CD4-positive, alpha-beta memory T cell (primary cell): ENCODE measurements at regions of chr9 and their contacts with region 1.

Region 1: GRCh38 chr9:5628530-5629311 is at the start of gene RIC1:
- DNase-seq: peak; percentile 89 to 90 (median 90)
- H3K4me3 ChIP-seq: peak within 1 kb of the TSS; percentile 82 to 86
- H3K4me3 Mint-ChIP-seq: peak within 1 kb of the TSS; percentile 97 to 99 (median 98)
- H3K27ac ChIP-seq: peak within 1 kb of the TSS; percentile 89
- H3K27ac Mint-ChIP-seq: peak within 1 kb of the TSS; percentile 92 to 99 (median 97)
- H3K4me1 ChIP-seq: peaks cover 76% of the 10 kb centered on the region
- H3K4me1 Mint-ChIP-seq: peaks cover 44 to 65% (median 53%) of the 10 kb centered on the region in 4 donors
- H3K27me3 ChIP-seq: no peaks in the 10 kb centered on the region
- H3K27me3 Mint-ChIP-seq: no peaks in the 10 kb centered on the region
- total RNA-seq, gene RIC1: 26.3 to 27.1 TPM

Region 2: GRCh38 chr9:4740638-4741364 is 887.9 kb before region 1 on chr9 and contains the start of gene AK3:
- CTCF ChIA-PET with region 1: no interaction called
- POLR2A ChIA-PET with region 1: interaction called, 12 read pairs
- intact Hi-C with region 1: no loop called
- DNase-seq: peak; percentile 82 to 87 (median 84)
- H3K4me3 ChIP-seq: peak within 1 kb of the TSS; percentile 79 to 84
- H3K4me3 Mint-ChIP-seq: peak within 1 kb of the TSS; percentile 91 to 97 (median 94)
- H3K27ac ChIP-seq: peak within 1 kb of the TSS; percentile 78
- H3K27ac Mint-ChIP-seq: peak within 1 kb of the TSS; percentile 65 to 96 (median 94)
- H3K4me1 ChIP-seq: peaks cover 29% of the 10 kb centered on the region
- H3K4me1 Mint-ChIP-seq: peaks cover 20 to 44% (median 32%) of the 10 kb centered on the region in 4 donors
- H3K27me3 ChIP-seq: no peaks in the 10 kb centered on the region
- H3K27me3 Mint-ChIP-seq: no peaks in the 10 kb centered on the region
- total RNA-seq, gene AK3: 23.1 to 25.2 TPM

Region 3: DNA sequence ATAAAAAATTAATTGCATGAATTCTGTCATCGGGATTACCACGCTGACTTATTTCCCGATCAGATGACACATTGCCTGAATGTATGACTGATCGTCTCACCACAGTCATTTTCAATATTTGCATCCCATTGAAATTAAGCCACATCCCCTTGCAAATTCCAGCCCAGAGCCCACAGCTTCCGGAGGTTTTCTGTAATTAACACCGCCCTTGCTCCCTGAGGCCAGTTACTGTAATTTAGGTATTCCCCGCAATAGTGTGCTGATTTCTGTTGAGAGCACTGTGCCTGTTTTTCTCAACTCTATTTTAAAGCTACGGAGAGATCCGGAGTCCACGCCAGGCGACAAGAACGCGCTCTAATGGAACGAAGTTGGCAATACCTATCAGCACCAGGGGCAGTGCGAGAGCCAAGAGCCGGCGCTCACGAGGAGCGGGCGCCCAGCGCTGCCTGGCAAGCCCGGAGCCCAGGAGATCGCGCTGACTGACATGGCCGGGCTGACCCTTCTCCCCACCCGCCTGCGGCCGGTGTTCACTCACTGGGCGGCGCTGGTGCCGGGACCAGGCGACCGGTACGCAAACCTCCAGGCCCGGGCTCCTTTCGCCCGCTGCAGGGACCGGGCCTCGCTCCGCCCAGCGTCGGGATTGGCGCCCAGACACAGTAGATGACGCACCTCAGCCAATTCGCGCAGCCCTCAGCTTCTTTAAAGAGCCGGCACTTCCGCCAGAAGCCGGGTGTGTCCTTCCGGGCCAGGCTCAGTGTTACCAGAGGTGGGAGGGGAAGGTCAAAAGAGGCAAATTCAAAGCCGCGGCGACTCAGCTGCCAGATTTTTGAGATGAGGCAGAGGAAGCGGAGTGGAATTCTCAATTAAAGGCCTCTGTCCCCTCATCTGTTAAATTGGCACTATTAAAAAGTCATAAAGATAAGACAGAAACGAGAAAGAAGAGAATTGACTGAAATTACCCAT is 191.2 kb before region 1 on chr9 and contains the start of gene PLGRKT:
- CTCF ChIA-PET with region 1: interaction called, 5 read pairs
- POLR2A ChIA-PET with region 1: interaction called, 27 read pairs
- intact Hi-C with region 1: loop called (anchors 1 kb)
- DNase-seq: peak; percentile 89 to 95 (median 91)
- H3K4me3 ChIP-seq: peak within 1 kb of the TSS; percentile 71 to 83
- H3K4me3 Mint-ChIP-seq: peak within 1 kb of the TSS; percentile 91 to 98 (median 94)
- H3K27ac ChIP-seq: peak within 1 kb of the TSS; percentile 92
- H3K27ac Mint-ChIP-seq: peak within 1 kb of the TSS; percentile 99 to 100 (median 99)
- H3K4me1 ChIP-seq: peaks cover 23% of the 10 kb centered on the region
- H3K4me1 Mint-ChIP-seq: peaks cover 25 to 46% (median 36%) of the 10 kb centered on the region in 4 donors
- H3K27me3 ChIP-seq: no peaks in the 10 kb centered on the region
- H3K27me3 Mint-ChIP-seq: no peaks in the 10 kb centered on the region
- total RNA-seq, gene PLGRKT: 20.0 to 21.7 TPM

Region 4: DNA sequence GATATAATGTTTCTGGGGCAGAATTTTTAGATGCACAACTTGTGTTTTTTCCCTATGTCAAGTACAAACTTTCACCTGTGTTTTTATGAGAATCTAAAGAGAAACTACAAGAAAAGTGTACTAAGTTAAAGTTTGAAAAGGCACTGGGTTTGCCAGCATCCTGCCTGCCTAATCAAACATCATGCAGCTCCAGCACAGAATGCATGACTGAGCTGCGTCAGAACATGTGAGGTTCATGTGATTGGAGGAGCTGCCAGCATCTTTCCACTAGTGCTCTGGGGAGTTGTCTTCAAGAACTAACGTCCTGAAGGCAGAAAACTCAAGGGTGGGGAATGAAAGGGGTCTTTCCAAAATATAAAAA is 45.9 kb before region 1 on chr9:
- CTCF ChIA-PET with region 1: interaction called, 3 read pairs
- POLR2A ChIA-PET with region 1: interaction called, 28 read pairs
- intact Hi-C with region 1: no loop called
- DNase-seq: peak in 4 of 5 donors; percentile 42 to 63 (median 52)
- H3K4me3 ChIP-seq: no peak overlapping the region
- H3K4me3 Mint-ChIP-seq: peak overlapping the region in 3 of 8 donors; percentile 7 to 48 (median 13)
- H3K27ac ChIP-seq: no peak overlapping the region
- H3K27ac Mint-ChIP-seq: peak overlapping the region; percentile 49 to 92 (median 88)
- H3K4me1 ChIP-seq: peaks cover 35% of the 10 kb centered on the region
- H3K4me1 Mint-ChIP-seq: peaks cover 43 to 64% (median 44%) of the 10 kb centered on the region in 4 donors
- H3K27me3 ChIP-seq: no peaks in the 10 kb centered on the region
- H3K27me3 Mint-ChIP-seq: no peaks in the 10 kb centered on the region

Region 5: DNA sequence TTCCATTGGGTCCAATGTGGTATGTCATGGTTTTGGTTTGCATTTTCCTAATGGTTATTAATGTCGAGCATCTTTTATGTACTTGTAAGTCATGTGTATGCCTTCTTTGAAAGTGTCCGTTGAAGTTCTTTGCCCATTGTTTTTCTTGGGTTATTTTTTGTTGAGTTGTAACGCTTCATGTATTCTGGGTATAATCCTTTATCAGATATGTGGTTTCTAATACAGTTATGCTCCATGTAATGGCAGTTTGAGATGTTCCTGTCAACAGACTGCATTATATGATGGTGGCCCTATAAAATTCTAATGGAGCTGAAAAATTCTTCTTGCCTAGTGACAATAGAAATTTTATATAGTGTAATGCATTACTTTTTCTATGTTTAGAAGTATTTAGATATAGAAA is 17.4 kb after region 1 on chr9:
- CTCF ChIA-PET with region 1: no interaction called
- POLR2A ChIA-PET with region 1: no interaction called
- intact Hi-C with region 1: no loop called
- DNase-seq: no peak
- H3K4me3 ChIP-seq: no peak overlapping the region
- H3K4me3 Mint-ChIP-seq: peak overlapping the region in 1 of 8 donors; percentile 10
- H3K27ac ChIP-seq: no peak overlapping the region
- H3K27ac Mint-ChIP-seq: no peak overlapping the region
- H3K4me1 ChIP-seq: no peaks in the 10 kb centered on the region
- H3K4me1 Mint-ChIP-seq: peaks cover 23 to 48% (median 38%) of the 10 kb centered on the region in 4 donors
- H3K27me3 ChIP-seq: no peaks in the 10 kb centered on the region
- H3K27me3 Mint-ChIP-seq: no peaks in the 10 kb centered on the region

Region 6: GRCh38 chr9:5671711-5672353 is 43.1 kb after region 1 on chr9:
- CTCF ChIA-PET with region 1: no interaction called
- POLR2A ChIA-PET with region 1: interaction called, 10 read pairs
- intact Hi-C with region 1: loop called (anchors 1 kb)
- DNase-seq: peak; percentile 61 to 71 (median 67)
- H3K4me3 ChIP-seq: peak overlapping the region in 1 of 2 donors; percentile 11
- H3K4me3 Mint-ChIP-seq: peak overlapping the region in 6 of 8 donors; percentile 0 to 77 (median 42)
- H3K27ac ChIP-seq: no peak overlapping the region
- H3K27ac Mint-ChIP-seq: peak overlapping the region; percentile 5 to 74 (median 57)
- H3K4me1 ChIP-seq: peaks cover 26% of the 10 kb centered on the region
- H3K4me1 Mint-ChIP-seq: peaks cover 27 to 42% (median 32%) of the 10 kb centered on the region in 4 donors
- H3K27me3 ChIP-seq: no peaks in the 10 kb centered on the region
- H3K27me3 Mint-ChIP-seq: no peaks in the 10 kb centered on the region

Region 7: GRCh38 chr9:6008169-6008979 is 379.7 kb after region 1 on chr9:
- CTCF ChIA-PET with region 1: interaction called, 4 read pairs
- POLR2A ChIA-PET with region 1: interaction called, 15 read pairs
- intact Hi-C with region 1: loop called (anchors 1 kb)
- DNase-seq: peak; percentile 90 to 99 (median 95)
- H3K4me3 ChIP-seq: peak overlapping the region in 1 of 2 donors; percentile 82
- H3K4me3 Mint-ChIP-seq: peak overlapping the region; percentile 69 to 93 (median 82)
- H3K27ac ChIP-seq: peak overlapping the region; percentile 83
- H3K27ac Mint-ChIP-seq: peak overlapping the region; percentile 91 to 96 (median 94)
- H3K4me1 ChIP-seq: peaks cover 45% of the 10 kb centered on the region
- H3K4me1 Mint-ChIP-seq: peaks cover 28 to 76% (median 45%) of the 10 kb centered on the region in 4 donors
- H3K27me3 ChIP-seq: no peaks in the 10 kb centered on the region
- H3K27me3 Mint-ChIP-seq: no peaks in the 10 kb centered on the region

Region 8: GRCh38 chr9:6757456-6758247 is 1128.9 kb after region 1 on chr9 and contains the start of gene KDM4C:
- CTCF ChIA-PET with region 1: no interaction called
- POLR2A ChIA-PET with region 1: interaction called, 13 read pairs
- intact Hi-C with region 1: loop called (anchors 2 kb)
- DNase-seq: peak; percentile 94 to 96 (median 94)
- H3K4me3 ChIP-seq: peak within 1 kb of the TSS; percentile 66 to 82
- H3K4me3 Mint-ChIP-seq: peak within 1 kb of the TSS; percentile 95 to 99 (median 98)
- H3K27ac ChIP-seq: peak within 1 kb of the TSS; percentile 92
- H3K27ac Mint-ChIP-seq: peak within 1 kb of the TSS; percentile 97 to 100 (median 100)
- H3K4me1 ChIP-seq: peaks cover 22% of the 10 kb centered on the region
- H3K4me1 Mint-ChIP-seq: peaks cover 21 to 51% (median 31%) of the 10 kb centered on the region in 4 donors
- H3K27me3 ChIP-seq: no peaks in the 10 kb centered on the region
- H3K27me3 Mint-ChIP-seq: no peaks in the 10 kb centered on the region
- total RNA-seq, gene KDM4C: 80.5 to 90.7 TPM